Posterior cingulate gyrus (tissue), 11 donors: ENCODE measurements at regions of chr5 and their contacts with region 1.

Region 1: GRCh38 chr5:43469702-43470366 is 13.8 kb downstream of the TMEM267 start:
- DNase-seq: no peak

Region 2: GRCh38 chr5:42985129-42986037 is 484.5 kb before region 1 on chr5:
- intact Hi-C with region 1: loop called (anchors 5 kb)
- DNase-seq: no peak

Region 3: GRCh38 chr5:43268188-43268820 is 201.5 kb before region 1 on chr5:
- intact Hi-C with region 1: no loop called
- DNase-seq: no peak